Right ventricle myocardium inferior (tissue), 1 donor: ENCODE measurements at regions of chr10 and their contacts with region 1.

Region 1: GRCh38 chr10:101141616-101142532 is 10.8 kb downstream of the TLX1 start:
- DNase-seq: peak; percentile 85
- ATAC-seq: peak; percentile 87

Region 2: DNA sequence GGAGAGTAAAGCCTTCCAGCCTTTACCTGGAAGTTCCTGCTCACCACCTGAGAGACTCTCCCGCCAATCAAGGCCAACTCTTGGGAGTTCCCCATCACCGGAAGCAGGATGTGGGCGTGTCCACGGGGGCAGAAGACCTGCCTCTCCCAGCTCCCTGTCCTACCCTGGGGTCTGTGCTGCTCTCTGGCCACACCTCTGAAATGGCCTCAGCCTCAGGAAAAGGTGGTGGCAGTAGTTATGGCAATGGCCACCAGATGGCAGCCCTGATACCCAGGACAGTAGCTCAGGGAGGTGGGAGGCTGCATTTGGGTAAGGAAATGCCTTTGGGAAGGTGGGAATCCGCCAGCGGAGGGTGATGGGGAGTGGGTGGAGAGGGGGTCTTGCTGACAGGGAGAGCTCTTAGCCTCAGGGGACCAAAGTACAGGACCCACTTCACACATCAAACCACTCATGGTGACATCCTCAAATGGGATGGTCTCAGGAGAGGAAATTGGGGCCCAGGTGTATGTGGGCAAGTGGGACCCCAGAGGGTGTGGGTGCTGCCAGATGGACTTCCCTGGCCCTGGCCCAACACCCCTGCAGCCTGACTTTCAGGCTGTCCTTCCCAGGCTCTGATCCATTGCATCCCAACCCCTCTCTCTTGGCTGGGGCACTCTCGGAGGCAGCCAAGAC is 46.2 kb before region 1 on chr10:
- intact Hi-C with region 1: loop called (anchors 1 kb)
- DNase-seq: no peak
- ATAC-seq: peak; percentile 74